ENCODE measurements at regions of chr1 and their contacts with region 1.

Region 1: GRCh38 chr1:221994274-221994698 is 252.4 kb upstream of the DUSP10 start:
- DNase-seq: peak; percentile 60
- H3K4me3 Mint-ChIP-seq: no peak overlapping the region
- H3K27ac Mint-ChIP-seq: peak overlapping the region; percentile 97
- H3K4me1 Mint-ChIP-seq: peaks cover 38% of the 10 kb centered on the region
- H3K27me3 Mint-ChIP-seq: peaks cover 2% of the 10 kb centered on the region

Region 2: GRCh38 chr1:221478050-221478949 is 516.0 kb before region 1 on chr1:
- CTCF ChIA-PET with region 1: no interaction called
- POLR2A ChIA-PET with region 1: no interaction called
- intact Hi-C with region 1: loop called (anchors 10 kb)
- DNase-seq: peak; percentile 70
- H3K4me3 Mint-ChIP-seq: no peak overlapping the region
- H3K27ac Mint-ChIP-seq: no peak overlapping the region
- H3K4me1 Mint-ChIP-seq: peaks cover 3% of the 10 kb centered on the region
- H3K27me3 Mint-ChIP-seq: peaks cover 6% of the 10 kb centered on the region

Region 3: DNA sequence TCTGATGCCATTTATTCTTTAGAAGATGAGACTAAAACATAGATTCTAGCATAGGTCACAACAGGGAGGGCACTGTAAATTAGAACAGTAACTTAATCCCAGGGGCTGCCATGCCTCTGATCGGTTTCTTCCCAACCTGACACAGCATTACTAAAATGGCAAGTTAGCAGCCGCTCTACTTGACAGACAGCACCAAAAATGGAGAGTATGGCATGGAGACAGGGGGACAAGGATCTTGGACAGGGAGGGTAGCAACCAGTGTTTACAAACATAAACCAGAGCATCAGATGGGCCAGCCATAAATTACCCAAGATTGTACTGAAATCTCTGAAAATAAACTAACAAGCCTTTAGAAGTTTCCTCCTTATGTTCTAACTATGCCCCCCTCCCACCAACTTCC is 258.3 kb before region 1 on chr1:
- CTCF ChIA-PET with region 1: no interaction called
- POLR2A ChIA-PET with region 1: no interaction called
- intact Hi-C with region 1: no loop called
- DNase-seq: no peak
- H3K4me3 Mint-ChIP-seq: no peak overlapping the region
- H3K27ac Mint-ChIP-seq: no peak overlapping the region
- H3K4me1 Mint-ChIP-seq: peaks cover 61% of the 10 kb centered on the region
- H3K27me3 Mint-ChIP-seq: no peaks in the 10 kb centered on the region

Region 4: GRCh38 chr1:221753828-221754188 is 240.5 kb before region 1 on chr1:
- CTCF ChIA-PET with region 1: no interaction called
- POLR2A ChIA-PET with region 1: no interaction called
- intact Hi-C with region 1: loop called (anchors 1 kb)
- DNase-seq: no peak
- H3K4me3 Mint-ChIP-seq: no peak overlapping the region
- H3K27ac Mint-ChIP-seq: peak overlapping the region; percentile 19
- H3K4me1 Mint-ChIP-seq: peaks cover 33% of the 10 kb centered on the region
- H3K27me3 Mint-ChIP-seq: no peaks in the 10 kb centered on the region

Region 5: GRCh38 chr1:221829327-221830015 is 164.8 kb before region 1 on chr1:
- CTCF ChIA-PET with region 1: no interaction called
- POLR2A ChIA-PET with region 1: no interaction called
- intact Hi-C with region 1: loop called (anchors 1 kb)
- DNase-seq: peak; percentile 83
- H3K4me3 Mint-ChIP-seq: peak overlapping the region; percentile 30
- H3K27ac Mint-ChIP-seq: peak overlapping the region; percentile 90
- H3K4me1 Mint-ChIP-seq: peaks cover 53% of the 10 kb centered on the region
- H3K27me3 Mint-ChIP-seq: no peaks in the 10 kb centered on the region

Region 6: DNA sequence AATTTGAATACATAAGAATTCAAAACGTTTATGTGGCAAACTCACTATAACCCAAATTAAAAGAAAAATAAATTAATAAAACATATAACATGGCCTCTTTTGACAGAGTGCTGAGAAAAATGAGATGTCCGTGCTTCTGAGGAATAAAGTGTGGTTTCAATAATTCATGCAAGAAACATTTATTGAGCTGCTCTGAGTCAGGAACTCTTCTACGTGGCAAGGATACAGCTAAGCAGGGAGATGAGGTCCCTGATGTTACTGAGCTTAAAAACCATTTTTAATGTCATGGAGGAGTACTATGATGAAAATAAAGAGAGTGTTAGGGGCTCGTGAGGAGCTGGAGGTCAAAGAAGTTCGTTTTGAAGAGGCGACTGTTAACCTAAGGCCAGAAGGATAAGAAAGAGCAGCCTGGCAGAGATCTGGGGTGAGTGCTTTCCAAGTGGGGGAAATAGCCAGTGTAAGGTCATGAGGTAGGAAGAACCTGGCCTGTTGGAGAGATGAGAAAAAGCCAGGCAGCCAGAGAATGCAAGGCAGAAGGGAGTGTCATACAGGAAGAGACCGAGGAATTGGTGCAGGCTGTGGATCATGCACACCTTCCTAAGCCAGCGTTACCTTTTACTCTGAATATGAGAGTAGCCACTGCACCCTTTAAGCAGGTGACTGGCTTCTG is 70.2 kb before region 1 on chr1:
- CTCF ChIA-PET with region 1: no interaction called
- POLR2A ChIA-PET with region 1: no interaction called
- intact Hi-C with region 1: no loop called
- DNase-seq: no peak
- H3K4me3 Mint-ChIP-seq: no peak overlapping the region
- H3K27ac Mint-ChIP-seq: no peak overlapping the region
- H3K4me1 Mint-ChIP-seq: no peaks in the 10 kb centered on the region
- H3K27me3 Mint-ChIP-seq: no peaks in the 10 kb centered on the region

Region 7: DNA sequence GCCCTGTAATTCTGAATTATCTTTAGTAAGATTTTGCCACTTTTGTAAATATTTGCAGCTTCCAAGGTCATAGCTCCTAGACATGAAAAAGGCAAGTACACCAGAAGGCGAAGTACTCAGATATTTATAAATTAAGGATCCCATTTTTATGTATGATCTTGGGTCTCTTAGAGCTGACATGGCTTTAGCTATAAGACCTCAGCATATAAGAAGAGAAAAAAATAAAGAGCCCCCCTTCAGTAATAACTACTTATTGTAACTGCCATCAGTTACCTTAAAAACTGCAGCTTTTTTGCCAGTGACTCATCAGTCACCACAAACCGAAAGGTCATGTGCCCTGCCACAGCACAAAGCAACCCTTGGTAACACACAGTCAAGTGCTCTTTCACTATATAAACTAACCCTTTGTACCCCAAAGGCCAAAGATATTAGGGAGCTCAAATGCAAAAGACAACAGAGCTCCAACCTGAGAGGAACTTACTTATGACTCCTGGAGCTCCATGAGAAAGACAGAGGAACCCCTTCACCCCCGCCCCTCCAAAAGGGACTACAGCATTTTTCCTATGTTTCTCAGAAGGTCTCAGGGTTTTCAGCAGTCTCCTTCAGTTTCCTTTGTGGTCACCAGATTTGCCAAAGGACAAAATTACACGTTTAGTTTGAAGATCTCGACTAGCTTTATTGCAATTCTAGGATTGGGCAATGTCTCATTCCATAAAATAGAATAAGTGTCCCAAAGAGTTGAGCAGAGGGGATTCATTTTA is 32.6 kb before region 1 on chr1:
- CTCF ChIA-PET with region 1: interaction called, 3 read pairs
- POLR2A ChIA-PET with region 1: no interaction called
- intact Hi-C with region 1: loop called (anchors 1 kb)
- DNase-seq: peak; percentile 72
- H3K4me3 Mint-ChIP-seq: no peak overlapping the region
- H3K27ac Mint-ChIP-seq: peak overlapping the region; percentile 38
- H3K4me1 Mint-ChIP-seq: peaks cover 14% of the 10 kb centered on the region
- H3K27me3 Mint-ChIP-seq: no peaks in the 10 kb centered on the region

Region 8: DNA sequence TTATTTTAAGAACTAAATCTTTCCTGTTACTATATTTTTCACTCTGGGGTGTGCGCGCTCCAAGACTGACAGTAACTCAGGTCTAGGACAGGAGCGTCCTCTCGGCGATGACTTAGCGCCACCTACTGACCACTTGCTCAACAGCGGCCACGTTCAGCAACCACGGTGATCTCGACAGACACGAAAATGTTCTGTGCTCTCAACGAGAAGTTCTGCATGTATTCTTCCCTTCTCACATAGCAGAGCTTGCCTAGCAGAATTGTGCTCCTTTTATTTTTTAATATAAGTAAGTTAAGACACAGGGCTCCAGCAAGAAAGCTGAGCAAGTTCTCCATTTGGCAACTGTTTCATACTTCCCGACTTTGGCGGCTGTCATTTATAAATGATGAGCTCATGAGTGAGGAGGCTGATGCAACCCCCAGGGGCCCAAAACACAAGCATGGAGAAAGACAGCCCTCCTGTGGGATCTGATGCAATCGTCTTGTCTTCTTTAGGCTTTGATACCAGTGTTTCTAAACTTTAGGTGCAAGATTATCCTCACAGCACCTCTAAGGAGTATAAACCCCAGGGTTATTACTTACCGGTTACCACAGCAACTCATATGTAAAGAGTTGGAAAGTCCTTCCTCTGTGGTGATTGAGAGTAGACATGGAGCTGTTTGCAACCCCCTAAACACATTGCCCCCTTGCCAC is 461.0 kb after region 1 on chr1:
- CTCF ChIA-PET with region 1: interaction called, 3 read pairs
- POLR2A ChIA-PET with region 1: no interaction called
- intact Hi-C with region 1: loop called (anchors 10 kb)
- DNase-seq: peak; percentile 88
- H3K4me3 Mint-ChIP-seq: no peak overlapping the region
- H3K27ac Mint-ChIP-seq: no peak overlapping the region
- H3K4me1 Mint-ChIP-seq: peaks cover 14% of the 10 kb centered on the region
- H3K27me3 Mint-ChIP-seq: no peaks in the 10 kb centered on the region

Measured in activated CD4-positive, alpha-beta memory T cell treated with anti-CD3 and anti-CD28 coated beads for 36 hours (primary cell).